Tibial artery (tissue), 4 donors: ENCODE measurements at regions of chr5 and their contacts with region 1.

Region 1: GRCh38 chr5:80481019-80481893 is 6.6 kb upstream of the FAM151B start:
- DNase-seq: no peak
- H3K4me3 ChIP-seq: no peak overlapping the region
- H3K27ac ChIP-seq: no peak overlapping the region
- H3K4me1 ChIP-seq: no peaks in the 10 kb centered on the region
- H3K27me3 ChIP-seq: no peaks in the 10 kb centered on the region
- CTCF ChIP-seq: no peak

Region 2: GRCh38 chr5:80318212-80318611 is 163.0 kb before region 1 on chr5:
- intact Hi-C with region 1: no loop called
- DNase-seq: no peak
- H3K4me3 ChIP-seq: no peak overlapping the region
- H3K27ac ChIP-seq: no peak overlapping the region
- H3K4me1 ChIP-seq: no peaks in the 10 kb centered on the region
- H3K27me3 ChIP-seq: no peaks in the 10 kb centered on the region
- CTCF ChIP-seq: no peak

Region 3: DNA sequence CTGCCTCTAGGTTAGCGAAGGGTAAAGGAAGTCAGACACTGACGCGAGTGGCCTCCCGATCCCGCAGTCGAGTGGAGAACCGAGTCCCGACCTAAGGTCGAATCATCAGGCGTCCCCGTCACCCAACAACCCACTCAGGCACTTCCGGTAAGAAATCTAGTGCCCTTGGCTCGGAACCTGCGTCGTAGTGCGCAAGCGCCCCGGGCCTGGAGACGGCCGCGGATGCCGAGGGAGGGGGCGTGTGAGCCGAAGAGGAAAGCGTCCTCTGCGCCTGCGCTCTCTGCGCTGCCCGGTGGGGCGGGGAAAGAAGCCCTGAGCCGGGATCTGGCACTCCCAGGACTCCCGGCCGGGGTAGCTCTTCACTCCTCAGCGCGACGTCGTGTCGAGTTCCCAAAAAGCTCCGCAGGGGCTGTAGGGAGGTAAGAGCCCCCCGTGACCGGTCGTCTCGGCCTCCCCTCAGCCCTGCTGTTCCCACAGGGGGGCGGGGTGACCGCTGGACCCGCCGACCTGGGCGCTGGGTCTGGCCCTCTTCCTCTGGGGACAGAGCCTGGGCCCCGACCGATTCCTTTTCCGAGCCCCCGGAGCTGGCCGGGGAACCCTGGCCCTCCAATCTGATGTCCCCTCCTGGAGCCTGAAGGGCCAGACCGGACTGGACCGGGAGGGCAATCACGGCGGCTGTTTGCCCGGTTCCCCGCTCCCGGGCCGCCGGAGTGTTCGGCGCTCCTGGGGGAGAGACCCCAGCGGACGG is 73.3 kb before region 1 on chr5 and contains the start of gene ZFYVE16:
- intact Hi-C with region 1: loop called (anchors 5 kb)
- DNase-seq: peak; percentile 97 to 99
- H3K4me3 ChIP-seq: peak within 1 kb of the TSS; percentile 96
- H3K27ac ChIP-seq: peak within 1 kb of the TSS; percentile 96 to 99
- H3K4me1 ChIP-seq: peaks cover 0 to 36% (median 12%) of the 10 kb centered on the region in 4 donors
- H3K27me3 ChIP-seq: no peaks in the 10 kb centered on the region
- CTCF ChIP-seq: peak; percentile 42 to 59

Region 4: GRCh38 chr5:80516826-80517225 is 35.6 kb after region 1 on chr5:
- intact Hi-C with region 1: no loop called
- DNase-seq: no peak
- H3K4me3 ChIP-seq: no peak overlapping the region
- H3K27ac ChIP-seq: no peak overlapping the region
- H3K4me1 ChIP-seq: no peaks in the 10 kb centered on the region
- H3K27me3 ChIP-seq: no peaks in the 10 kb centered on the region
- CTCF ChIP-seq: no peak

Region 5: DNA sequence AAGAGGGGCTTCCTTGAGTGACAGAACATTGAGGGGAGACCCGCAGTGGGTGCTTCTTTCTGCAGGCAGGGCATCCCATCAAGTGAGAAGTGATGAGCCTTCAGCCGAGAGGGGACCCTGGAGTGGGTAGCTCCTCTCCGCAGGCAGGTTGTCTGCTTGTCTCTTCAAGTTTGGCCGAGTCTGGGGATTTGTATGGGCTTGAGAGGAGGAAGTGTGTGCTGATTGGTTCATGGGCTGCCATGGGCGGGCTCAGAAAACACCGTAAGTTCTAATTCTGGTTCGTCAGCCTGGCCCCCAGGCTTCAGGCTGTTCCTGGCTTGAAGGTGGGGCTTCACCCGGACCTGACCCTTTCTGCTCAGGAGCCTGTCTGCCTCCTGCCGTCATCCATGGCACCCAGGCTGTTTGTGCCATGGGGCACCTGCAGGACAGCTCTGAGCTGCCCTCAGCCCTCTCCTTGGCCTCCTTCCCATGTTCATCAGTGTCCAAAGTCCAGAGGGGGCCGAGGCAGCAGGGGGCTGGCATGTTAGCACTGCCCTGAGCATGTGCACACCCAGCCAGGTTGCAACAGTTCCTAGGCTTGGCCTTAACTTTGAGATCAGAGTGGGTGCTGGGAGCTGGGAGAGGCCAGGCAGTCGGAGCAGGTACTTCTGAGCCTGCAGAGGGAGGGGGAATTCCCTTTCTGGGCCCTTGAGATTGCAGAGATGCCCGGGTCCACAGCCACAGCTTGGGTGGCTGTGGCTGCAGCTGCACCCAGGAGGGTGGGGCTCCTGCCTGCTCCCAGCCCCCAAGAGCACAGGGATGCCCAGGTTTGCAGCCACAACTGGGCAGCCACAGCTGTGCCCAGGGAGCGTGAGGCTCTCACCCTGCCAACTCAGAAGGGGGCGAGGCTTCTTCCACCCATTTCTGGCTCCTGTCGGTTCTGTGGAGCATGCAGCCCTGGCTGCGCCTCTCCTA is 187.0 kb after region 1 on chr5:
- intact Hi-C with region 1: no loop called
- DNase-seq: no peak
- H3K4me3 ChIP-seq: no peak overlapping the region
- H3K27ac ChIP-seq: no peak overlapping the region
- H3K4me1 ChIP-seq: no peaks in the 10 kb centered on the region
- H3K27me3 ChIP-seq: no peaks in the 10 kb centered on the region
- CTCF ChIP-seq: no peak